ENCODE measurements at regions of chr1 and their contacts with region 1.

Region 1: DNA sequence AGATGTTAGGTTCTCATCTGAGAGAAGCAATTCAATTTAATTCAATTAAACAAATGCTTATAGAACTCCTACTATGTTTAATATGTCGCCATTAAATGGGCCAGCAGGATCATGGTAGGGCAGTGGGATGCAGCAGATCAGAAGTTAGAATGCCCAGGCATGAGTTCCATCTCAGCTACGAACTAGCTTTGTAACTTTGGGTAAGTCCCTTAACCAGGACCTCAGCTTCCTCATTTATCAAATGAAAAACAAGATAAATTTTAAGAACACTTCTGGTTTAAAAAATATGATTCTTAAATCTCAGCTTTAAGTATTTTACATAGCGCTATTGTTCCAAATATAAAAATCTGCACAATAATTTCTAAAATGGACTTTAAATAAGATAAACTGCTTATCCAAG is 67.5 kb upstream of the GFI1 start:
- DNase-seq: no peak
- H3K4me3 Mint-ChIP-seq: no peak overlapping the region
- H3K27ac Mint-ChIP-seq: no peak overlapping the region
- H3K4me1 Mint-ChIP-seq: peaks cover 26% of the 10 kb centered on the region
- H3K27me3 Mint-ChIP-seq: no peaks in the 10 kb centered on the region

Region 2: GRCh38 chr1:92536980-92537884 is 17.0 kb before region 1 on chr1:
- CTCF ChIA-PET with region 1: interaction called, 10 read pairs
- POLR2A ChIA-PET with region 1: no interaction called
- DNase-seq: peak; percentile 62
- H3K4me3 Mint-ChIP-seq: peak overlapping the region; percentile 65
- H3K27ac Mint-ChIP-seq: peak overlapping the region; percentile 91
- H3K4me1 Mint-ChIP-seq: peaks cover 78% of the 10 kb centered on the region
- H3K27me3 Mint-ChIP-seq: no peaks in the 10 kb centered on the region

Region 3: DNA sequence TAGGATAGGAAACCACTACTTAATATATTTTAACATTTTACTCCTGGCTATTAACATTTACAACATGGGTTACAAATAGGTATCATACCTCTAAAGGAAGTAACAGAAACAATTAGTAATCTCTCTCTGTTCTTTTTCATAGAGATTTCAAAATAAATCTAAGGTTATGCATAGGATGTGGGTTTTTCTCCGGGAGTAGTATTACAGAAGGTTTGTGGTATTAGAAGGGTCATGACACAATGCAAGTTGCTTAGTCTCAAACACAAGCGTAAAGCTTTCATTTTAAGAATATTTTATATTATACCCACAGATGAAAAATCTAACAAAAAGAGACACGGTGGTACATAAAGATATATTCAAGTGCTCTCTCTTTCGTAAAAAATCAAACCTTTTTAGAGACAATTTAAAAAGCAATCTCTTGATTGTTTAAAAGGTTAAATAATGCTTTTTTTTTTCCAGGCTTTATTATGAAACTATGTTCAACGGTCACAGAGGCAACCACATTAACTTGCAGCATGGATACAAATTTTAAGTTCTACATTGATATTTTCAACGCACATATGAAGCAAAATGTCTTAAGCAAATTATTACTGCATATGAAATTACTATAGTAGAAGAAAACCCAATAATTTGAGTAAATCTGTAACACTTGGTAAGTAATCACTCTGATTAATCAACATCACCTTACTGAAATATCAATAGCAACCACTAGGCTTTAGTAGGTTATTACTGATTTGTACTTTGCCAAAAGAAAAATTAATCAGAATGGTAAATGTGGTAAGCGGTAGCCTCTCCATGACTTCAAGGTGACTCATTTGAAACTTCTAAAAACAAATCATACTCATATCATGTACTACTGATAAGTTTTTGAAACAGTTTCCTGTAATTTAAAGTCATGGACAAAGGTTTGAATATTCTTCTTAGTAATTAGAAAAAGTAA is 29.9 kb after region 1 on chr1:
- CTCF ChIA-PET with region 1: no interaction called
- POLR2A ChIA-PET with region 1: no interaction called
- DNase-seq: peak; percentile 35
- H3K4me3 Mint-ChIP-seq: peak overlapping the region; percentile 50
- H3K27ac Mint-ChIP-seq: peak overlapping the region; percentile 97
- H3K4me1 Mint-ChIP-seq: peaks cover 65% of the 10 kb centered on the region
- H3K27me3 Mint-ChIP-seq: no peaks in the 10 kb centered on the region